Activated naive CD4-positive, alpha-beta T cell treated with anti-CD3 and anti-CD28 coated beads for 36 hours (primary cell): ENCODE measurements at regions of chr5 and their contacts with region 1.

Region 1: DNA sequence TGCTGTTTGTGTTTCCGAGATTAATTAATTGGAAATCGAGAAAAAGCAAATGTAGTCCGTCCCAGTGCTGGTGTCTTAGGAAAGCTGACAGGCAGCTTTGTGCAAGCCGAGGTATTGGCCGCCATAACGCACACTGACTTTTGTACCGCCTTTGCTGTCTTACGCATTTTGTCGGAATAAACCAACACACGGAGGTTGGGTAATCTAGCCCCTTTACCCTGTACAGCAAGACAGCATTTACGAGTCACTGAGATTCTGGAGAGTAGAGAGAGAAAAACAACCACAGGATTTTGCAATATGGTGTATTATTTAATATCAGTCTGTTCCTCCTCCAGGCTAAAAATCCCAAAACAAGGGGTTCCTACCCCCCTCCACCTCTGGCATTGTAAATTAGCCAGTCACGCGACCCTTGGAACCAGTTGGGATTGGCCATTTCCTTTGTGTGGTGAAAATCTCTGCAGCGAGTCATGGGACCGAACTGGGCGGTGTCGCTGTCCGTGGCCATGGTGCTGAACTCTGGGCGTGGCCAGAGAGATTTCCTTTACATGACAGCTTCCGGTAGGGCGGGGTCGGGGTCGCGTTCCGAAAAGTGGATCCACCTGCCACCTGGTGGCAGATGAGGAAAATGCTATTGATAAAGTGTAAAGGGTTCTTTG is 10.3 kb upstream of the PCDHB1 start:
- DNase-seq: peak; percentile 85
- H3K4me3 Mint-ChIP-seq: no peak overlapping the region
- H3K27ac Mint-ChIP-seq: no peak overlapping the region
- H3K4me1 Mint-ChIP-seq: no peaks in the 10 kb centered on the region
- H3K27me3 Mint-ChIP-seq: peaks cover 21% of the 10 kb centered on the region

Region 2: DNA sequence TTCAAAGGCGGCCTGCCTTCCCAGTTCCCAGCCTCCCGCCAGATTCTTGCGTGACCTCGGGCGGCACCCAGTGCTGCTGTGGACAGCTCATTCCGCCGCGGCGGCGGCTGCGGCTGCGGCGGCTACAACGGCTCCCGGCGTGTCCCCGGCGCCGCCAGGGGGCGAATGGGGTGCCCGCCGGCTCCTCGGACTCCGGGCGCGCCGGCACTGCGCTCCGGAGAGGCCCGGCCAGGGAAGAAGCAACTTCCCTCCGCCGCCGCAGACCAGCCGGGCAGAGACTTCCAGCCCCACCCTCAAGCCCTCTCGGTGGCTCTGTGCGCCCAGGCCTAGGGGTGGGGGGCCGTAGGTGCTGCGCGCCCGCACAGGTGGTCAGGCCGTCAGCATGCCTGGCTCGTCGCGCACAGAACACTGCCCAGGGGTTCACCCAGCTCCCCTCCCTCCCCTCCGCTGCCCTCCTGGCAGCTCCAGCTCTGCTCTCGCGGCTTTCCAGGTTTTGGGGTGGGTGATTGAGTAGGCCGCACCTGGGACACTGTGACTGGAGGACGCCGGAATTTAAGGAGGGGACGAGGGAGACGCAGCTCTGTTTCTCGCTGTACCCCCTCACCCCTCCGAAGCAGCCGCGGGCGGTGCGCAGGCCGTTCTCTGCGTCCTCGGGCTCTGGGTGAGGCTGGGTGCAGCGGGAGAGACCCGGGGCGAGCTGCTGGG is 894.9 kb before region 1 on chr5:
- CTCF ChIA-PET with region 1: no interaction called
- intact Hi-C with region 1: loop called (anchors 10 kb)
- DNase-seq: peak; percentile 64
- H3K4me3 Mint-ChIP-seq: peak overlapping the region; percentile 52
- H3K27ac Mint-ChIP-seq: no peak overlapping the region
- H3K4me1 Mint-ChIP-seq: peaks cover 15% of the 10 kb centered on the region
- H3K27me3 Mint-ChIP-seq: peaks cover 20% of the 10 kb centered on the region

Region 3: DNA sequence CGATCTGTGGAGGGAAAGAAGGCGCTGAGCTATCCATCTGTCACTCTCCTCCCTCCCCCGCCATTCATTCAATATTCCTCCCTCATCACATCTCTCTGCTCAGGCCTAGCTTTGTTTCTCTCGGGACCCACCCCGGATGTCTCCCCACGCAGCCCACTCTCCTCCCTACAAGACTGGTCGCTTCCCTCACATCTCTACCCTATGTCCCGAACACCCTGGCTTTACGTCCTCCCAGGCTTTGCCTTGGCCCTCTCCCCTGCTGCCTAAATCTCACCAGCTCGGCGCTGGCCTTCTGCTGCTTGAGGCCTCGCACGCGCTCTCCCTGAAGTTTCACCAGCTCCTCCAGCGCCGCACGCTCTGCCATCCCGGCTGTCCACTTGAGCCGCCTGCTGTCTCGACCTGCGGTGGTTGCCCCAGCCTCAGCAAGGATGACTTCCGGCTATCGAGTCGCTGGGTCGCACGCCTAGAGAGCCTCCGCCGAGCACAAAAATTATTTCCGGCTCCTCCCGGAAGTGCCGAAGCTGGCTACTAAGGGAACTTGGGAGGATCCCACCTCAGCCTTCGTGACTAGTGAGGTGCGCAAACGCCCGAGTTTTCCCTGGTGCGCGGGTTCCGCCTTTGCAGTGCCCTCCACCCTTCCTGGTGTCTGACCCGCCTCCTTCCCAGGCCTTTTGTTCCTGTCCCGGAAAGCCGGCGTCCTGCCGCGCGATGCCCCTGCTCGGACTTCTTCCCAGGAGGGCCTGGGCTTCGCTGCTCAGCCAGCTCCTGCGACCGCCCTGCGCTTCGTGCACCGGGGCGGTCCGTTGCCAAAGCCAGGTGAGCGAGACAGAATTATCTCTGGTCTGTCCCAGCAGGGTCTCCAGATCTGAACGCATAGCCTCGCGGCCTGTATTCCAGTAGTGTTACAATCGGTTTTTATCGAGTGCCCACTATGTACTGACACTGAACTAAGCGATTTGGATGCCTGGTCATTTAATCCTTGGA is 349.7 kb before region 1 on chr5 and contains the starts of genes HARS1 and HARS2:
- CTCF ChIA-PET with region 1: no interaction called
- intact Hi-C with region 1: loop called (anchors 1 kb)
- DNase-seq: peak; percentile 92
- H3K4me3 Mint-ChIP-seq: peak within 1 kb of the TSS; percentile 100
- H3K27ac Mint-ChIP-seq: peak within 1 kb of the TSS; percentile 97
- H3K4me1 Mint-ChIP-seq: peaks cover 35% of the 10 kb centered on the region
- H3K27me3 Mint-ChIP-seq: no peaks in the 10 kb centered on the region
- total RNA-seq, gene HARS1: 69.0 to 74.8 TPM
- total RNA-seq, gene HARS2: 27.4 to 29.3 TPM

Region 4: DNA sequence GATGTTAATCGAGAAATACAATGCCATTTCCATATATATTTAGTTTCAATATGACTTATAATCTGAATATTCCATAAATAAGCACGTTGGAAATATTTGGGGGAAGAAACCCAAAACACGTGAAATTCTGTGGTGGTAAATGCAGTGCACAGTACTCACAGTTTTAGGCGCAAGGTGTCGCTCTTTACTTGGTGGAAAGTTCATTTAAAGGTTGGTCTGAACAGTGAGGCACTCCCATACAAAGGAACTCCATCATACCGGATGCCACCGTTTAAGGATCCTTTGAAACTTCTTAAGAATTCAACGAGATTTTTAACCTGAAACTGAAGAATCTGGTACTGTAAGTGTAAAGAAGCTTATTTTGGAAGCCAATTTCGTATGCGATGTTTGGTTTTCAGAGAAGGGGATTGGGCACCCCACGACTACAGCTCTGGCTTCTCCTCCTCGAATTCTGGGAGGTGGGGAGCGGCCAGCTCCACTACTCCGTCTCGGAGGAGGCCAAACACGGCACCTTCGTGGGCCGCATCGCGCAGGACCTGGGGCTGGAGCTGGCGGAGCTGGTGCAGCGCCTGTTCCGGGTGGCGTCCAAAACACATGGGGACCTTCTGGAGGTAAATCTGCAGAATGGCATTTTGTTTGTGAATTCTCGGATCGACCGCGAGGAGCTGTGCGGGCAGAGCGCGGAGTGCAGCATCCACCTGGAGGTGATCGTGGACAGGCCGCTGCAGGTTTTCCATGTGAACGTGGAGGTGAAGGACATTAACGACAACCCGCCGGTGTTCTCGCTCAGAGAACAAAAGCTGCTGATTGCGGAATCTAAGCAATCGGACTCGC is 172.0 kb before region 1 on chr5 and contains the start of gene PCDHA11:
- CTCF ChIA-PET with region 1: no interaction called
- intact Hi-C with region 1: loop called (anchors 1 kb)
- DNase-seq: no peak
- H3K4me3 Mint-ChIP-seq: no peak within 1 kb of the TSS
- H3K27ac Mint-ChIP-seq: no peak within 1 kb of the TSS
- H3K4me1 Mint-ChIP-seq: no peaks in the 10 kb centered on the region
- H3K27me3 Mint-ChIP-seq: peaks cover 32% of the 10 kb centered on the region
- total RNA-seq, gene PCDHA11: not detected

Region 5: GRCh38 chr5:140926443-140927227 is 114.3 kb before region 1 on chr5:
- CTCF ChIA-PET with region 1: no interaction called
- intact Hi-C with region 1: loop called (anchors 2 kb)
- DNase-seq: peak; percentile 44
- H3K4me3 Mint-ChIP-seq: peak overlapping the region; percentile 38
- H3K27ac Mint-ChIP-seq: no peak overlapping the region
- H3K4me1 Mint-ChIP-seq: peaks cover 8% of the 10 kb centered on the region
- H3K27me3 Mint-ChIP-seq: peaks cover 52% of the 10 kb centered on the region